Cardiac septum (tissue), 1 donor: ENCODE measurements at regions of chr3 and their contacts with region 1.

Region 1: GRCh38 chr3:58491506-58492402 is at the start of gene KCTD6:
- DNase-seq: peak; percentile 96
- total RNA-seq, gene KCTD6: 7.5 TPM

Region 2: GRCh38 chr3:58305882-58306711 is 185.7 kb before region 1 on chr3 and contains the starts of genes HTD2 and RPP14:
- intact Hi-C with region 1: loop called (anchors 5 kb)
- DNase-seq: peak; percentile 99
- total RNA-seq, gene HTD2: 12.9 TPM
- total RNA-seq, gene RPP14: 17.0 TPM

Region 3: DNA sequence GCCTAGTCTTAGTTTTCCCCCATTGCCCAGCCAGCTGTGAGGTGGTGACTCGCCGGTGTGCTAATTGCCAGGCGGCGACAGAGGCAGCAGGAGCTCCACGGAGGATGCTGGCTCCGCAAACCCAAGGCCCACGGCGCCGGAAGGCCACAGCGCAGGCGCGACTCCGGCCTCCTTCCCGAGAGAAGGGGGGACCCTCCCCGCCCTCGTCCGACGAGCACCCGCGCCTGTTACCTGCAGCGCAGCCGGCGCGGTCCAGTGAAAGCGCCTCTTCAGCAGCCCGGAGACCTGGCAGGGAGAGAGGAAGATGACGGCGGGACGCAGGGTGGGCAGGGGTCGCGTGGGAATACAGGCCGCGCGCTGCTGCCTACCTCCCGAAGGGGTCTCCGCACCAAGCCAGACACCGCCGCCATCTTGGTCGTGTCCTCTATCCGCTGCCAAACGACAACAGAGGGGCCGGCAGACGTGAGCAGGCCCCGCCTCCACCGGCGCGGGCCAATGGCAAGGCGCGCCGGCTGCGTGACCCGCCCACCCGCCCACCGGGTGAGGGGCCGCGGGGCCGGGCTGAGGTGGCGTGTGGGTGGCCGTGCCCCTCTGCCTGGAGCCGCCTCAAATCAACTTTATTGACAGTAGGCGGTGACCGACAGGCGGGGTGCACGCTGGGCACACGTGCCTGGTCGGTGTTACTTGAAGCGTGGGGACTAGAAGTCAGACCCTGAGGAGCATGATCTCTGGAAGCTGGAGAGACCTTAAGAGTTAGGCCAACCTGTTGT is 58.2 kb before region 1 on chr3 and contains the start of gene PDHB:
- intact Hi-C with region 1: loop called (anchors 5 kb)
- DNase-seq: peak; percentile 96
- total RNA-seq, gene PDHB: 174 TPM

Region 4: GRCh38 chr3:58532794-58533220 is 41.1 kb after region 1 on chr3:
- intact Hi-C with region 1: loop called (anchors 2 kb)
- DNase-seq: peak; percentile 83

Region 5: DNA sequence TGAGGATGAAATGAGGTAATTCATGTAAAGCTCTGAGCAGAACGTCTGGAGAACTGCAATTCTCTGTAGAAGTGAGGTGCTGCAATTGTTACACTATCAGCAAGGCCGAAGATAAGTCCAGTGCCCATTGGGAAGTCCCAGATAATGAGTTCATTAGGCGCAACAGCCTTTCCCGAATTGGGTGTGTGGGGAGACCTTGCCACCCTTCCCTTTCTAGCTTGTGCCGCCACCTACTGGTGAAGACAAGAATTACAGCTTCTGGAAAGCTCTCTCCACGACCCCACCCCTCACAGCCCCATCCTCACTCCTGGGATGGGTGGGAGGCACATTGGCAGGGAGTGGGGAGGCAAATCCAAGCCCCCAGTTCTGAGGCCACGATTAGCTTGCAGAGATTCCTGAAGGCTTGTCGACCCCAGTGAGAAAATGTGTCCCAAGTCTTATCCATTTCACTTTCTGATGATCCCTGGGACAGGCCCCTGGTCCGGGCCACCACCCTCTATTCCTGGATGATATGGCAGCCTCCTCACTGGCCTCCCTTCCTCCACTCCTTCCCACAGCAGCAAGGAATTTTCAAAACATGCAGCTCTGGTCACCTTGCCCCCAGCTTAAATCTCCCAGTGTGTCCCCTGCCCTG is 138.4 kb after region 1 on chr3:
- intact Hi-C with region 1: loop called (anchors 5 kb)
- DNase-seq: peak; percentile 82